OCI-LY7 (cell line): ENCODE measurements at regions of chr7 and their contacts with region 1.

Region 1: DNA sequence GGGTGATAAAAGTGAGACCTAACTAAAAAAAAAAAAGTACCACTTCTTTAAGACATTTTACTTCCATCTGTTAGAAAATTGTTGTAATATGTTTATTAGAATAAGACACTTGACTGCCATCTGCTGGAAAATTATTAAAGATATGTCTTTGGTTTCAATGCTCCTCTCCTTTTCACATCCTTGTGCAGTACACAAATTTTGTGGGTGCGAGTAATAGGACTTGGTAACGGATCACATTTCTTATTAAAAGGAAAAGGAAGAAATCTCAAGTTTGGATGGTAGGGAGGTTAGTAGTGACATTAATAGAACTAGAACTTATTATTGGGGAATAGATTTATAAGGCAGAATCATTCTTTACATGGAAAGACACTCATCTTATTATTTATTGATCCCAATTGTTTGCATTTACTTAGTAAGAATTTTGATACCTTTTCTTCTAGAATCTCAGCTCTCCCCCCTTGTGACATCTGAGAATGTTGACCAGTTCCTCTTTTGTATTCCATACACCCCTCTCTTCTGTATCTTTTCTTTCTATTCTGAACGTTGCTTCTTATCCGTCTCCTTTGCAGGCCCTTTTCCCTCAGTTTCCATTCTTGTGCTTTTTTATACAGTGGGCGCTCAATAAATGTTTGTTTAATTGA is 43.1 kb upstream of the RPA3 start:
- DNase-seq: peak; percentile 68
- H3K4me3 ChIP-seq: peak overlapping the region; percentile 65
- H3K27ac ChIP-seq: no peak overlapping the region
- H3K4me1 ChIP-seq: peaks cover 17% of the 10 kb centered on the region
- CTCF ChIP-seq: peak; percentile 74

Region 2: GRCh38 chr7:7595451-7595850 is 166.0 kb before region 1 on chr7:
- CTCF ChIA-PET with region 1: no interaction called
- POLR2A ChIA-PET with region 1: no interaction called
- intact Hi-C with region 1: loop called (anchors 5 kb)
- DNase-seq: peak; percentile 55
- H3K4me3 ChIP-seq: no peak overlapping the region
- H3K27ac ChIP-seq: no peak overlapping the region
- H3K4me1 ChIP-seq: no peaks in the 10 kb centered on the region
- CTCF ChIP-seq: peak; percentile 80

Region 3: DNA sequence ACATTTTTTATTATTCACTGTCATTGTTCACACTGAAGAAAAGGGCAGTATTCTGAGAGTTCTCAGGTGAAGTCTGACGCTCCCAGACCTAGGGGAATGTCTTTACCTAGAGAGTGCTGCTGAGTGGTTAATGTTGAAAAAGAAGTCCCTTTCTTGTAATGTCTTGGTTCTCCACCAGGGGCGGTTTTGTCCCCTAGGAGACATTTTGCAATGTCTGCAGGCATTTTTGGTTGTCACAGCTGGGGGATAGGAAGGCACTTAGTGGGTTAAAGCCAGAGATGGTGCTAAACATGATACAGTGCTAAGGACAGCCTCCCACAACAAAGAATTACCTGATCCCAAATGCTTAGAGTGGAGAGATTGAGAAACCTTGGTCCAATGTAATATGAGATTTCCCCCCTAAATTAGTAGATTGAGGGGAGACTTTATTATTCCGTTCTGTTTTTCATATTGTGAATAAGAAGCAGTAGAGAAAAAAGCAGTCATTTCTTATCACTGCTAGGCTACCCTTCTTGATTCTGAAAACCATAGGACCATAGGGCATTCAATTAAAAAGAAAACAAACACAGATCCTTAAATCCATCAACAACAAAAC is 107.8 kb before region 1 on chr7:
- CTCF ChIA-PET with region 1: no interaction called
- POLR2A ChIA-PET with region 1: no interaction called
- intact Hi-C with region 1: no loop called
- DNase-seq: peak; percentile 57
- H3K4me3 ChIP-seq: no peak overlapping the region
- H3K27ac ChIP-seq: no peak overlapping the region
- H3K4me1 ChIP-seq: no peaks in the 10 kb centered on the region
- CTCF ChIP-seq: peak; percentile 82

Region 4: DNA sequence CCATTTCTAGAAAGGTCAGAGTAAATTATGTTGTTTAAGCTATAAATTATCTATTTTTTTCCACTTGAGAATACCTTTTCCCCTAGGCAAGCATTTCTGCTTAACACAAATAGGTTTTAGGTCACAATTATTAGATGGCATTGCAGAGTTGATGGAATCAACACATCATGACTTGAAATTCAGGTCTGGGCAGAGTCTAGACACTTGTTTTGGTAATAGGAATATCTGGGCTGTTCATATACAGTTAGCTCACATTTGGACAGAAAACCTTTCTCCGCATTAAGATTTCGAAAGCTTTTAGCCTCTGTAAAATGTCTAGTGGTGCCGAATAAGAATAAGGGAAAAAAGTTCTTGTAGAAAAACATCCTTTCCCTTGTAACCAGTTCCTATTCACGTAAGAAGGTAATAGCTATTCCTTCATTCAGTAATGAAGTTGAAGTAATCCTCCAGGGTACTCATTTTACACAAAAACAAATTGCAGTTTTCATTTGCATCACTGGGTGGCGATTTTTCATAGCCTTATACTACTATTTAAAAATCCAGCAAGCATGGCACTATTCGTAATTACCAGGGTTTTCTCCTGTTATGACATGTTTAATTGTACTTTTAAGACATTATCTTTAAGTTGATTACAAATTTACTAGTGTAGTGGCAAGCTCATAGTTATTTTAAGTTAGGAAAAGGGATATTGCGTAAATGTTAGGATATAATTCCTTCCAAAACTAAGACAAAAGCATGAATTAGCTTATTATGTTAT is 80.1 kb before region 1 on chr7:
- CTCF ChIA-PET with region 1: interaction called, 5 read pairs
- POLR2A ChIA-PET with region 1: interaction called, 3 read pairs
- intact Hi-C with region 1: loop called (anchors 1 kb)
- DNase-seq: peak; percentile 75
- H3K4me3 ChIP-seq: no peak overlapping the region
- H3K27ac ChIP-seq: peak overlapping the region; percentile 12
- H3K4me1 ChIP-seq: peaks cover 6% of the 10 kb centered on the region
- CTCF ChIP-seq: peak; percentile 91

Region 5: GRCh38 chr7:7772397-7772821 is 10.9 kb after region 1 on chr7:
- CTCF ChIA-PET with region 1: no interaction called
- POLR2A ChIA-PET with region 1: interaction called, 27 read pairs
- intact Hi-C with region 1: no loop called
- DNase-seq: peak; percentile 50
- H3K4me3 ChIP-seq: peak overlapping the region; percentile 56
- H3K27ac ChIP-seq: peak overlapping the region; percentile 35
- H3K4me1 ChIP-seq: peaks cover 29% of the 10 kb centered on the region
- CTCF ChIP-seq: no peak

Region 6: DNA sequence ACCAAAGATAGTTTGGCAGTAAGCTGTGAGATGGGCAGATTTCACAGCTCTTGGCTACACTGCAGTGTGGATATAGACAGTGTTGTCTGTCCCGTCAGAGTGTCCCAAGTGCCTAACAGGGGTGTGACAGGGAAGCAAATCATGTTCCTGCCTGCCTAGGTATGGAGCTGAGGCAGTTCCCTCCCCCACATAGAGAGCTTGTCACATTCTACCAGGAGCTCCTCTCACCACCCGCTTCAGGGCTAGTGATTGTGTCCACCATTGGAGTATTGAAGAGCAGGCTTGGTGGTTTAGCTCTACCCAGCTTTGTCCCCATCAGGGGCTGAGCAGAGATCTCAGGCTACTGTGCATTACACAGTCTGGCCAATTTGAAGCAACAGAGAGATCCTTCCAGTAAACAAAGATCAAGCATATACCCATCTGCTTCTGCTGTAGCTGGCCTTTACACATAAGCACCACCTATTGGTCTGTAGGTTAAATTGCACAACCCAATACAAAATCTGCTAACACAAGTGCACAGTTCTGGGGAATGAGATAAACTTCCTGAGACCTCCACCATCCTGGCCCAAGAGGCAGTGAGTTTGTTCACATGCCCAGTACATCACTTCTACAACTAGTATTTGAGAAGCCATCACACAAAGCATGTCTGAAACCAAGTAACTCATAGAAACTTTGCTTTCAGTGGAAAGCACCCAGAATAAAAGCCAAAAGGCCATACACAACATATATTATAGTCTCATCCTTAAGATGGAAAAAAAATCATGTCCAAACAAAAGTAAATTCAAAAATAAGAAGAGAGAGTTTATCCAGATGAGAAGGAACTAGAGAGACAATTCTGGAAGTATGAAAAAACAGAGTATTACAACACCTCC is 274.4 kb after region 1 on chr7:
- CTCF ChIA-PET with region 1: no interaction called
- POLR2A ChIA-PET with region 1: interaction called, 4 read pairs
- intact Hi-C with region 1: loop called (anchors 5 kb)
- DNase-seq: peak; percentile 62
- H3K4me3 ChIP-seq: no peak overlapping the region
- H3K27ac ChIP-seq: no peak overlapping the region
- H3K4me1 ChIP-seq: peaks cover 10% of the 10 kb centered on the region
- CTCF ChIP-seq: peak; percentile 83